ENCODE measurements at regions of chr17 and their contacts with region 1.

Region 1: GRCh38 chr17:14316150-14316785 is 15.4 kb downstream of the HS3ST3B1 start:
- DNase-seq: no peak
- H3K4me3 Mint-ChIP-seq: no peak overlapping the region
- H3K27ac Mint-ChIP-seq: no peak overlapping the region
- H3K4me1 Mint-ChIP-seq: peaks cover 38% of the 10 kb centered on the region
- H3K27me3 Mint-ChIP-seq: no peaks in the 10 kb centered on the region

Region 2: GRCh38 chr17:14228903-14229302 is 87.4 kb before region 1 on chr17:
- CTCF ChIA-PET with region 1: no interaction called
- POLR2A ChIA-PET with region 1: no interaction called
- DNase-seq: no peak
- H3K4me3 Mint-ChIP-seq: no peak overlapping the region
- H3K27ac Mint-ChIP-seq: no peak overlapping the region
- H3K4me1 Mint-ChIP-seq: peaks cover 2% of the 10 kb centered on the region
- H3K27me3 Mint-ChIP-seq: no peaks in the 10 kb centered on the region

Region 3: DNA sequence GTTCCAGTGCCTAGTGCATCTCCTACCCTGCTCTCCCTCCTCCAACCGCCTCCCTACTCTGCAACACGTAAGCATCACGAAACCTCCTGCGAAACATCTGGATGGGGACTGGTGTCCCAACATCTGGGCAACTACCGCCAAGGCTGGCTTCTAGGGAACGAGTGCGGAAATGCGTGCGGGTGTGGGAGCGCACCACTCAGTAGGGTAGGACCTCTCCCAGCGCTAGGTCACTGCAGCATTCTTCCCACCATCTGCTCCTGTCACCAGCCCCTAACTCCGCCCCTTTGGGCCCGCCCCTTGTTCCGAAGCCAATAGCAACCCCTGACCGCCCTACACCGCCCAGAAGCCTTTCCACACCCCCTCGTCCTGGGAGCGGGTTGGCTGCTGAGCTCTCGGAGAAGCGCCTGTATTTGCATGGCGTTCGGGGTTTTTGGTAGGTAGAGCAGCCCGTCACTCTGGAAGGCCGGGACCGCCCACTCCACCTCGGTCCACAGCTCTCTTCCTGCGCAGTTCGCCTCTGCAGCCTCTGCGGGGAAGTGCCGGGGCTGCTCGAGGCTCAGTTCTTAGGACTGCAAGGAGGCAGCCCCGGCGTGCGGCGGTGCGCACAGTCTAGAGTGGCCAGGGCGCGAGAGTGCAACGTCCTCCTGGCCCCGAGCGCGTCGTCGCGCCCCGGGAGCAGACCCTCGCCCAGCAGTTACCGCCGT is 15.5 kb before region 1 on chr17 and contains the start of gene HS3ST3B1:
- CTCF ChIA-PET with region 1: interaction called, 18 read pairs
- POLR2A ChIA-PET with region 1: no interaction called
- DNase-seq: peak; percentile 100
- H3K4me3 Mint-ChIP-seq: peak within 1 kb of the TSS; percentile 91
- H3K27ac Mint-ChIP-seq: peak within 1 kb of the TSS; percentile 92
- H3K4me1 Mint-ChIP-seq: peaks cover 64% of the 10 kb centered on the region
- H3K27me3 Mint-ChIP-seq: peaks cover 39% of the 10 kb centered on the region
- total RNA-seq, gene HS3ST3B1: 11.5 to 11.9 TPM

Region 4: GRCh38 chr17:14340857-14341754 is 24.8 kb after region 1 on chr17:
- CTCF ChIA-PET with region 1: no interaction called
- POLR2A ChIA-PET with region 1: no interaction called
- DNase-seq: no peak
- H3K4me3 Mint-ChIP-seq: no peak overlapping the region
- H3K27ac Mint-ChIP-seq: no peak overlapping the region
- H3K4me1 Mint-ChIP-seq: peaks cover 36% of the 10 kb centered on the region
- H3K27me3 Mint-ChIP-seq: no peaks in the 10 kb centered on the region